GM12878 (cell line): ENCODE measurements at regions of chr9 and their contacts with region 1.

Region 1: DNA sequence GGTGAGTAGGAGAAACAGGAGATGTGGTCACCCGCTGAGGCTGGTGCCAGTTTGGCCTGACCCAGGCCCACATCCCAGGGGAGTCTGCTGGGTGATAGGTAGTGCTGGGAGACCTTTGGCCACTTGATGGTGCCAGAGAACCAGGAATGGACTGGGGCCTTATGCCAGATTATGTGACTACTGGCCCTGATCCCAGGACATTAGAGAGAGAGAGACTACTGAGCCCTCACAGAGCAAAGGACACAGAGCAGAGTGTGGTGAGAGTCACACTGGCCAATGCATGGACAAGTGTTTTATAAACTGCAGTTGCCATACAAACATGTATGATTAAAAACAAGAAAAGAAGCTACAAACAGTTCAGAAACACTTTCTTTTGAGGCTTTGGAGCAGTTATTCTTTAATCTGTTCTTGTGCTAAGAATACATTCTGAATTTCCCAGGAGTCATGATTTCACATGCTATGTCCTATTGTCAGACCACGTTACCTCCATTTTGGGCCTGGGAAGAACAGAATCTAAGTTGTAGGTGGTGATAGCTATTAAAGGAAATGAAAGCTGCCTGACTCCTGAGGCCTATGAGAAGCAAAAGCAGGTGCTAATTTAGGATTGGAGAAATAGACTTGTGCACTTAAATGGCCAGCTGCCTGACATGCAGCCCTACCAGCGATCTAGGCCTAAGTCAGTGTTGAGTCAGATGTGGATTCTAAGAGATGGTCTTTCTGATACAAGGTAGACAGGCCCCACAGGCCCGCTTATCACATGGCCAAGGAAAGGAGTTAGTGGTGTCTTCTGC is 32.6 kb upstream of the TMOD1 start:
- DNase-seq: peak; percentile 59
- ATAC-seq: peak; percentile 99
- H3K4me3 ChIP-seq: no peak overlapping the region; the same call in 1 of the 2 replicates
- H3K27ac ChIP-seq: peak overlapping the region; percentile 74
- H3K4me1 ChIP-seq: peaks cover 18% of the 10 kb centered on the region
- H3K27me3 ChIP-seq: no peaks in the 10 kb centered on the region
- CTCF ChIP-seq: peak; percentile 83 to 94 (median 92)
- EP300 ChIP-seq: no peak
- POLR2A ChIP-seq: no peak
- RAD21 ChIP-seq: peak; percentile 97

Region 2: GRCh38 chr9:97386733-97387503 is 81.9 kb before region 1 on chr9:
- CTCF ChIA-PET with region 1: interaction called, 37 read pairs
- POLR2A ChIA-PET with region 1: no interaction called
- RAD21 ChIA-PET with region 1: interaction called, 16 read pairs
- SMC1A ChIA-PET with region 1: interaction called, 12 read pairs
- in situ Hi-C with region 1: no loop called
- intact Hi-C with region 1: no loop called
- DNase-seq: no peak
- ATAC-seq: peak; percentile 44
- H3K4me3 ChIP-seq: no peak overlapping the region
- H3K27ac ChIP-seq: no peak overlapping the region
- H3K4me1 ChIP-seq: peaks cover 43% of the 10 kb centered on the region
- H3K27me3 ChIP-seq: no peaks in the 10 kb centered on the region
- CTCF ChIP-seq: peak; percentile 95 to 100 (median 98)
- EP300 ChIP-seq: no peak
- POLR2A ChIP-seq: no peak
- RAD21 ChIP-seq: peak; percentile 91

Region 3: DNA sequence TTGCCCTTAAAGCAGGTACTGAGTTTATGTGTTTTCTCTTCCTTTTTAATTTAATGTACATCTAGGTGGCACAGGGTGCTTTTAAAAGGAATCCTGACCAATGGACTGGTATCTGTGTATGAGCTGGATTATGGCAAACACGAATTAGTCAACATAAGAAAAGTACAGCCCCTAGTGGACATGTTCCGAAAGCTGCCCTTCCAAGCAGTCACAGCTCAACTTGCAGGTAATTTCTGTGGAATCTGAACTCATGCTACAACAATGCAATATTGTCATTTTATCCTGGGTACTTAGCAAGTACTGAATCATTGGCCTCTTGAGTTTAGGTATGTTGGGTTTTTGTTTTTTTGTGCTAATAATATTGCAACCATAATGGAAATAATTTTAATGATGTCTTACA is 18.3 kb after region 1 on chr9:
- CTCF ChIA-PET with region 1: interaction called, 90 read pairs
- POLR2A ChIA-PET with region 1: interaction called, 3 read pairs
- RAD21 ChIA-PET with region 1: interaction called, 6 read pairs
- SMC1A ChIA-PET with region 1: interaction called, 51 read pairs
- in situ Hi-C with region 1: no loop called
- intact Hi-C with region 1: no loop called
- DNase-seq: no peak
- ATAC-seq: peak; percentile 42; the same call in 2 of the 3 replicates
- H3K4me3 ChIP-seq: no peak overlapping the region
- H3K27ac ChIP-seq: no peak overlapping the region
- H3K4me1 ChIP-seq: peaks cover 5% of the 10 kb centered on the region; the same call in 1 of the 2 replicates
- H3K27me3 ChIP-seq: no peaks in the 10 kb centered on the region
- CTCF ChIP-seq: 0 out of 6 replicates have a peak, but pooled peaks of 1 of the 3 experiments have one; percentile 17
- EP300 ChIP-seq: no peak
- POLR2A ChIP-seq: no peak
- RAD21 ChIP-seq: no peak

Region 4: GRCh38 chr9:97518909-97519307 is 50.1 kb after region 1 on chr9:
- CTCF ChIA-PET with region 1: interaction called, 14 read pairs
- POLR2A ChIA-PET with region 1: no interaction called
- RAD21 ChIA-PET with region 1: interaction called, 5 read pairs
- SMC1A ChIA-PET with region 1: interaction called, 4 read pairs
- in situ Hi-C with region 1: no loop called
- intact Hi-C with region 1: no loop called
- DNase-seq: no peak
- ATAC-seq: no peak
- H3K4me3 ChIP-seq: no peak overlapping the region
- H3K27ac ChIP-seq: no peak overlapping the region
- H3K4me1 ChIP-seq: peaks cover 11% of the 10 kb centered on the region; the same call in 1 of the 2 replicates
- H3K27me3 ChIP-seq: no peaks in the 10 kb centered on the region
- CTCF ChIP-seq: no peak
- EP300 ChIP-seq: no peak
- POLR2A ChIP-seq: no peak
- RAD21 ChIP-seq: no peak

Region 5: GRCh38 chr9:97559111-97559514 is 90.3 kb after region 1 on chr9:
- CTCF ChIA-PET with region 1: interaction called, 31 read pairs
- POLR2A ChIA-PET with region 1: interaction called, 8 read pairs
- RAD21 ChIA-PET with region 1: interaction called, 31 read pairs
- SMC1A ChIA-PET with region 1: interaction called, 24 read pairs
- in situ Hi-C with region 1: no loop called
- intact Hi-C with region 1: no loop called
- DNase-seq: peak; percentile 85
- ATAC-seq: peak; percentile 90
- H3K4me3 ChIP-seq: peak overlapping the region; percentile 48; the same call in 1 of the 2 replicates
- H3K27ac ChIP-seq: peak overlapping the region; percentile 91
- H3K4me1 ChIP-seq: peaks cover 35% of the 10 kb centered on the region
- H3K27me3 ChIP-seq: no peaks in the 10 kb centered on the region
- CTCF ChIP-seq: no peak
- EP300 ChIP-seq: peak in 1 of 2 experiments; percentile 37; a peak in 1 of 4 replicates
- POLR2A ChIP-seq: 0 out of 2 replicates have a peak, but pooled peaks have one; percentile 38
- RAD21 ChIP-seq: no peak

Region 6: GRCh38 chr9:97623946-97624345 is 155.1 kb after region 1 on chr9:
- CTCF ChIA-PET with region 1: interaction called, 515 read pairs
- POLR2A ChIA-PET with region 1: no interaction called
- RAD21 ChIA-PET with region 1: interaction called, 270 read pairs
- SMC1A ChIA-PET with region 1: interaction called, 31 read pairs
- in situ Hi-C with region 1: no loop called
- intact Hi-C with region 1: no loop called
- DNase-seq: no peak
- ATAC-seq: no peak
- H3K4me3 ChIP-seq: no peak overlapping the region
- H3K27ac ChIP-seq: no peak overlapping the region
- H3K4me1 ChIP-seq: no peaks in the 10 kb centered on the region; the same call in 1 of the 2 replicates
- H3K27me3 ChIP-seq: no peaks in the 10 kb centered on the region
- CTCF ChIP-seq: no peak
- EP300 ChIP-seq: no peak
- POLR2A ChIP-seq: no peak
- RAD21 ChIP-seq: no peak

Region 7: DNA sequence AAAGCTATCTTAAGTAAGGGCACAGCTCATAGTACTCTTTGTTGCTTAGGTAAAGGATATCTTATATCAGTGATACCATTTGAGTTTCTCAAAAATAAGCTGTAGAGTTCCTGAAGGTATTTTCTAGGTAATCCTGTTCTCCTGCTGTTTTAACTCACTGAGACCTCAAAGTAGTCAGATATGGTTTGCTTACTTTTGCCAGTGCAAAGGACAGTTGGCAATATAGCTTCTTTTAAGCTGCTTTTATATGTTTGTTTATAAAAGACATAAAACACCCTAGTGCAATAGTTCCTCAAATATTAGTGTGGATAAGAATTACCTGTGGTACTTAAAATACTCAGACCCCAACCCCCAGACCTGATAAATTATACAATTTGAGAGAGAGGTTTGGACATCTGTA is 176.9 kb after region 1 on chr9:
- CTCF ChIA-PET with region 1: interaction called, 18 read pairs
- POLR2A ChIA-PET with region 1: no interaction called
- RAD21 ChIA-PET with region 1: no interaction called
- SMC1A ChIA-PET with region 1: interaction called, 10 read pairs
- in situ Hi-C with region 1: no loop called
- intact Hi-C with region 1: no loop called
- DNase-seq: no peak
- ATAC-seq: no peak
- H3K4me3 ChIP-seq: no peak overlapping the region
- H3K27ac ChIP-seq: no peak overlapping the region
- H3K4me1 ChIP-seq: no peaks in the 10 kb centered on the region
- H3K27me3 ChIP-seq: no peaks in the 10 kb centered on the region
- CTCF ChIP-seq: no peak
- EP300 ChIP-seq: no peak
- POLR2A ChIP-seq: no peak
- RAD21 ChIP-seq: no peak